CD8-positive, alpha-beta T cell (primary cell): ENCODE measurements at regions of chr3 and their contacts with region 1.

Region 1: DNA sequence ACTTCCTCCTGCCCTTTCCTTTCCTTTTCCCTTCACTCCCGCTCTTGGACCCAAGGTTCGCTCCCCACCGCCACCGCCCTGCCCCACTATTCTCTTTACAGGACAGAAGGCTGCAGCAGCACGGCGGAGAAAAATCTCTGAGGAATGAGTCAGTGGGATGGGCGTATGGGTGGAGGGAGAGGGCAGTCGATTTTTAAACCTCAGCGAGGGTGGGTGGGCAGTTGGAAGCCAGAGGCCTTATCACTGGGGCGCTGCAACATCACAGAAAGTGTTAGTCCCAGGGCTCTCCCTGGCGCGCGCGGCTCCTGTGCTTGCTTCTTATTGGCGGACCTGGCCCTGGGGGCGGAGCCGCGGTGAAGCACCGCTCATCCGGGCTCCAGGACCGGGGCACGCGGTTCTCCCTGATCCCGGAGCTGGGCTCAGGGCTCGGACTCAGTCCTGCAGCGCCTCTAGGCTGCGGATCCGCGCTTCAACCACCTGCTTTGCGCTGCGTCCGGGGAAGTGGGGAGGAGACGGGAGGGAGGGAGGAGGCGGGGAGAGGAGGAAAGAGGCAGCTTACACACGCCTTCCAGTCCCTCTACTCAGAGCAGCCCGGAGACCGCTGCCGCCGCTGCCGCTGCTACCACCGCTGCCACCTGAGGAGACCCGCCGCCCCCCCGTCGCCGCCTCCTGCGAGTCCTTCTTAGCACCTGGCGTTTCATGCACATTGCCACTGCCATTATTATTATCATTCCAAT is at the start of gene ALCAM:
- DNase-seq: peak; percentile 57 to 88 (median 75)
- ATAC-seq: peak; percentile 60
- H3K4me3 ChIP-seq: peak within 1 kb of the TSS; percentile 57 to 66
- H3K4me3 Mint-ChIP-seq: peak within 1 kb of the TSS; percentile 89
- H3K27ac ChIP-seq: peak within 1 kb of the TSS; percentile 63 to 85
- H3K27ac Mint-ChIP-seq: peak within 1 kb of the TSS; percentile 93
- H3K4me1 ChIP-seq: peaks cover 20% of the 10 kb centered on the region
- H3K4me1 Mint-ChIP-seq: peaks cover 32% of the 10 kb centered on the region
- H3K27me3 ChIP-seq: peaks cover 4 to 6% of the 10 kb centered on the region in 2 experiments
- H3K27me3 Mint-ChIP-seq: peaks cover 7% of the 10 kb centered on the region
- CTCF ChIP-seq: no peak
- total RNA-seq, gene ALCAM: 2.9 TPM

Region 2: DNA sequence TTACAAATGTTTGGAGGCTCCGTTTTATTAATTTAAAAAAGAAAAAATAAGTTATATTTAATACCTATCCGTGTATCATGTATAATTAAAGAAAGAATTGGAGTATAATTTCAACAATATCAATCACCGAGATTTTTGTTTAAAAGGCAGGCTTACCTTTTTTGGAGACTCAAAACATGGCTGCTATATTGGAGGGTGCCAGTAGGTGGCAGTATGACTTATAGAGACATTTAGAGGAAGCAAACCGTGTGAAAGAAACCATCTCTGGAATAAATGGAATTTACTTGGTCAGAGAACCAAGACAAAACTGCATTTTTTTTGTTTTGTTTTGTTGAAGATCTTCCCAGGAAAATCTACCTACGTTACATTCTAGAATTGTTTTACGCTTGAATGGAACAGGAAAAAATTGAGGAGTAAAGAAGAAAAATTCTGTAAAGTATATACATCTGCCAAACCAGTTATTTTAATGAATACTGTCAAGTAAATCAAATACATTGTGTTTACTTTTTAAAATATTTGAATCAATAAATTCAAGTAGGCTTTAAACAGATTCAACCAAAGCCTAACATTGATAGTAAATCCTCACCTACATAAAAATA is 802.4 kb before region 1 on chr3:
- CTCF ChIA-PET with region 1: interaction called, 4 read pairs
- POLR2A ChIA-PET with region 1: no interaction called
- intact Hi-C with region 1: loop called (anchors 1 to 5 kb)
- DNase-seq: peak; percentile 15 to 64 (median 57)
- ATAC-seq: peak; percentile 44
- H3K4me3 ChIP-seq: no peak overlapping the region
- H3K4me3 Mint-ChIP-seq: no peak overlapping the region
- H3K27ac ChIP-seq: no peak overlapping the region
- H3K27ac Mint-ChIP-seq: no peak overlapping the region
- H3K4me1 ChIP-seq: no peaks in the 10 kb centered on the region
- H3K4me1 Mint-ChIP-seq: no peaks in the 10 kb centered on the region
- H3K27me3 ChIP-seq: no peaks in the 10 kb centered on the region
- H3K27me3 Mint-ChIP-seq: no peaks in the 10 kb centered on the region
- CTCF ChIP-seq: peak; percentile 91

Region 3: DNA sequence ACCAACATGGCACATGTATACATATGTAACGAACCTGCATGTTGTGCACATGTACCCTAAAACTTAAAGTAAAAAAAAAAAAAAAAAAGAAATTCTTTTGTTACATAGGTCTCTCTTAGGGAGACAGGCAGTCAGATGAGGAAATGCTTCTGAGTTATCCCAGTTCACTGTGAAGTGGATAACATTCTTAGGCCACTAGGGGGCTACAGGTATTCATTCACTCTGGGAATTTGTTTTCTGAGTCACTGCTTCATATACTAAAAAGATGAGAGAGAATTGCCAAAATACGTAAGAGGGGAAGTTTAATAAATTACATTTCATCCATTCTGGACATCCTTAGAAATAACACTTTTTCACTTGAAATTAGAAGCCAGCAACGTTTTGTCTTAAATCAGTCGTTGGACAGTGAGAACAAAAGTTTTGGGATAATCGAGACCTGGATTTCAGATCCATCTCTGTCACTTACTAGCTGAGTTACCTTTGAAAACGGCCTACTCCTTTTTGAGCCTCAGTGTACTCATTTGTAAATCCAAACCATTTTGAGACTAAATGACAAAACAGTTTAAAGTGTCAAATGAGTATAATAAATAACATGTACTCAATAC is 738.2 kb before region 1 on chr3:
- CTCF ChIA-PET with region 1: no interaction called
- POLR2A ChIA-PET with region 1: no interaction called
- intact Hi-C with region 1: loop called in 1 of 2 experiments (anchors 5 kb)
- DNase-seq: peak in 2 of 9 experiments; percentile 4 to 11
- ATAC-seq: no peak
- H3K4me3 ChIP-seq: no peak overlapping the region
- H3K4me3 Mint-ChIP-seq: no peak overlapping the region
- H3K27ac ChIP-seq: no peak overlapping the region
- H3K27ac Mint-ChIP-seq: no peak overlapping the region
- H3K4me1 ChIP-seq: no peaks in the 10 kb centered on the region
- H3K4me1 Mint-ChIP-seq: no peaks in the 10 kb centered on the region
- H3K27me3 ChIP-seq: no peaks in the 10 kb centered on the region
- H3K27me3 Mint-ChIP-seq: no peaks in the 10 kb centered on the region
- CTCF ChIP-seq: no peak

Region 4: GRCh38 chr3:105385819-105386508 is 19.5 kb after region 1 on chr3:
- CTCF ChIA-PET with region 1: interaction called, 14 read pairs
- POLR2A ChIA-PET with region 1: no interaction called
- intact Hi-C with region 1: no loop called
- DNase-seq: no peak
- ATAC-seq: no peak
- H3K4me3 ChIP-seq: no peak overlapping the region
- H3K4me3 Mint-ChIP-seq: no peak overlapping the region
- H3K27ac ChIP-seq: no peak overlapping the region
- H3K27ac Mint-ChIP-seq: no peak overlapping the region
- H3K4me1 ChIP-seq: no peaks in the 10 kb centered on the region
- H3K4me1 Mint-ChIP-seq: no peaks in the 10 kb centered on the region
- H3K27me3 ChIP-seq: no peaks in the 10 kb centered on the region
- H3K27me3 Mint-ChIP-seq: peaks cover 2% of the 10 kb centered on the region
- CTCF ChIP-seq: no peak

Region 5: GRCh38 chr3:106176734-106177133 is 810.2 kb after region 1 on chr3:
- CTCF ChIA-PET with region 1: no interaction called
- POLR2A ChIA-PET with region 1: no interaction called
- intact Hi-C with region 1: loop called in 1 of 2 experiments (anchors 10 kb)
- DNase-seq: peak; percentile 8 to 86 (median 52)
- ATAC-seq: peak; percentile 95
- H3K4me3 ChIP-seq: peak overlapping the region; percentile 24 to 25
- H3K4me3 Mint-ChIP-seq: peak overlapping the region; percentile 47
- H3K27ac ChIP-seq: peak overlapping the region; percentile 25 to 66
- H3K27ac Mint-ChIP-seq: peak overlapping the region; percentile 75
- H3K4me1 ChIP-seq: peaks cover 50% of the 10 kb centered on the region
- H3K4me1 Mint-ChIP-seq: peaks cover 57% of the 10 kb centered on the region
- H3K27me3 ChIP-seq: no peaks in the 10 kb centered on the region
- H3K27me3 Mint-ChIP-seq: no peaks in the 10 kb centered on the region
- CTCF ChIP-seq: no peak